ENCODE measurements at regions of chr6 and their contacts with region 1.

Region 1: GRCh38 chr6:25556516-25556915 is 95.5 kb upstream of the SCGN start:
- DNase-seq: peak; percentile 30 to 85 (median 66)
- ATAC-seq: peak in 3 of 4 experiments; percentile 45 to 56 (median 48)
- H3K4me3 ChIP-seq: no peak overlapping the region
- H3K4me3 Mint-ChIP-seq: no peak overlapping the region
- H3K27ac ChIP-seq: no peak overlapping the region
- H3K27ac Mint-ChIP-seq: no peak overlapping the region
- H3K4me1 ChIP-seq: no peaks in the 10 kb centered on the region
- H3K4me1 Mint-ChIP-seq: peaks cover 0 to 2% (median 0%) of the 10 kb centered on the region in 3 donors
- H3K27me3 ChIP-seq: no peaks in the 10 kb centered on the region
- H3K27me3 Mint-ChIP-seq: no peaks in the 10 kb centered on the region

Region 2: GRCh38 chr6:24356310-24356973 is 1200.1 kb before region 1 on chr6:
- CTCF ChIA-PET with region 1: no interaction called
- POLR2A ChIA-PET with region 1: no interaction called
- DNase-seq: no peak
- ATAC-seq: no peak
- H3K4me3 ChIP-seq: no peak overlapping the region
- H3K4me3 Mint-ChIP-seq: peak overlapping the region in 2 of 3 donors; percentile 14 to 94
- H3K27ac ChIP-seq: no peak overlapping the region
- H3K27ac Mint-ChIP-seq: no peak overlapping the region
- H3K4me1 ChIP-seq: peaks cover 7 to 24% of the 10 kb centered on the region in 2 experiments
- H3K4me1 Mint-ChIP-seq: peaks cover 24 to 35% (median 35%) of the 10 kb centered on the region in 3 donors
- H3K27me3 ChIP-seq: peaks cover 0 to 16% of the 10 kb centered on the region in 2 experiments
- H3K27me3 Mint-ChIP-seq: peaks cover 1% of the 10 kb centered on the region in 2 donors

Region 3: DNA sequence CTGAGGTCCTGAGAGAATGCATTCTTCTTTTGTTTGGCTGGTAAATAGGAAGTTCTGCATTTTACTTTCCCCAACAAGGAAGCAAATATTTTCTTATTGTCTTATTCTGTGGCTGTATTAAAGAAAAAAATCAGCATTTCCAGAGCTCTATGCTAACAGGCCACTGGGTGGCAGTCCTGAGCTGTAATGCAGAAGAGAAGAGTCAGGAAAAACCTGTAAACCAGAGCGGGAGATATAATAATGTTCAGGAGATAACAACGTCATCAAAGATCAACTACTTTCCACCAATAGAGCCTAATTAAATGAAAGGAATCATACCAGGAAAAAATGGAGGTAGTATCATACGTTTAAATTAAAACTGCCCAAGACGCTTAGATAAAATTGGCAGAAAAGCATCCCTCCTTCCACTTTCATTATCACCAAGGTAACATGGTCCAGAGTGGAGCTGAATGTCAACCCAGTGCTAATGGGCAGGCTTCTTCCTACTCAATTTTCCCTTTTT is 333.0 kb before region 1 on chr6:
- CTCF ChIA-PET with region 1: interaction called, 3 to 16 read pairs
- POLR2A ChIA-PET with region 1: no interaction called
- DNase-seq: peak in 34 of 35 experiments; percentile 4 to 82 (median 53)
- ATAC-seq: peak; percentile 42 to 71 (median 54)
- H3K4me3 ChIP-seq: peak overlapping the region in 1 of 2 donors; percentile 13
- H3K4me3 Mint-ChIP-seq: peak overlapping the region; percentile 28 to 65 (median 62)
- H3K27ac ChIP-seq: no peak overlapping the region
- H3K27ac Mint-ChIP-seq: no peak overlapping the region
- H3K4me1 ChIP-seq: peaks cover 3% of the 10 kb centered on the region in 2 experiments
- H3K4me1 Mint-ChIP-seq: peaks cover 7 to 12% (median 9%) of the 10 kb centered on the region in 3 donors
- H3K27me3 ChIP-seq: no peaks in the 10 kb centered on the region
- H3K27me3 Mint-ChIP-seq: peaks cover 7 to 11% of the 10 kb centered on the region in 2 donors

Region 4: DNA sequence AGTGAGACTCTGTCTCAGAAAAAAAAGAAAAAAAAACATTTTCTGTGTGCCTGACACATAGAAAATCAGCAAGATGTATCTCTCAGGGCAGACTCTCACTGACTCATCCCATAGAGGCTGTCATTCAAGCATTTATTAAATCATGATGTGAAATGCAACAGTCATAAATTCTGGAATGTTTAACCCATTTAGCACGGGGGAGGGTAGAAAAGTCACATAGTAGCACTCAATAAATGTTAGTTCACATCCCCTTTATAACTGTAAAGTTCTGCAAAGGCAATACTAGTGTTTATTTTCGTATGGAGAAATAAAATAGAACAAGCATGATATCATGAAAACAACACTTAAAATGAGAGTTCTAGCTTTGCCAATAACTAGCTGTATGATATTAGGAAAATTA is 292.9 kb before region 1 on chr6:
- CTCF ChIA-PET with region 1: interaction called, 8 to 30 read pairs
- POLR2A ChIA-PET with region 1: interaction called in 1 of 2 experiments, 3 read pairs
- DNase-seq: no peak
- ATAC-seq: no peak
- H3K4me3 ChIP-seq: no peak overlapping the region
- H3K4me3 Mint-ChIP-seq: no peak overlapping the region
- H3K27ac ChIP-seq: no peak overlapping the region
- H3K27ac Mint-ChIP-seq: no peak overlapping the region
- H3K4me1 ChIP-seq: peaks cover 0 to 3% of the 10 kb centered on the region in 2 experiments
- H3K4me1 Mint-ChIP-seq: peaks cover 2 to 6% (median 2%) of the 10 kb centered on the region in 3 donors
- H3K27me3 ChIP-seq: no peaks in the 10 kb centered on the region
- H3K27me3 Mint-ChIP-seq: peaks cover 3 to 7% of the 10 kb centered on the region in 2 donors

Measured in T-cell (primary cell).